HepG2 (cell line): ENCODE measurements at regions of chr7 and their contacts with region 1.

Region 1: GRCh38 chr7:140249036-140249806 is 72.4 kb upstream of the KDM7A start:
- DNase-seq: peak; percentile 95
- ATAC-seq: peak; percentile 59
- H3K4me3 ChIP-seq: peak overlapping the region in 1 of 3 experiments; percentile 9; a peak in 1 of 6 replicates
- H3K27ac ChIP-seq: peak overlapping the region; percentile 68
- H3K4me1 ChIP-seq: peaks cover 95% of the 10 kb centered on the region
- H3K27me3 ChIP-seq: no peaks in the 10 kb centered on the region
- CTCF ChIP-seq: no peak
- EP300 ChIP-seq: peak; percentile 70 to 94; a peak in 3 of 4 replicates
- POLR2A ChIP-seq: no peak
- RAD21 ChIP-seq: no peak

Region 2: DNA sequence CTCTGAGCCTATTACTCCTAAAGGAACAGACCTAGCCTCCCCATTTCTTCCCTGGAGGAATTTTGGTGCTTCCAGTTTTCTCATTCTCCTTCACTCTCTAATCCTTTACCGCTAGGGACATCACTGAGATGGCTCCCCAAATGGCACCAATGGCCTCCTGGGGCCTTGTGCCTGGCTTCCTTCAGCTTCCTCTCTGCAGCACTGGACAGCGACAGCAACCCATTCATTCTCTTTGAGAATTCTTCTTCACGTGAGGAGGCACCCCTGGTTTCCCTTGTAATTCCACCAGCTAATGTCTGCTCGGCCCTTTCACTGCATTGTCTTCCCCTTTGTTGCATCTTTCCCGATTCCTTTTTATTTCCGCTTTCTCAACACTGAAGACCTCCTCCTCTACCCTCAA is 47.8 kb before region 1 on chr7:
- CTCF ChIA-PET with region 1: no interaction called
- POLR2A ChIA-PET with region 1: no interaction called
- in situ Hi-C with region 1: no loop called
- intact Hi-C with region 1: no loop called
- DNase-seq: no peak
- ATAC-seq: peak; percentile 42; the same call in 2 of the 3 replicates
- H3K4me3 ChIP-seq: no peak overlapping the region
- H3K27ac ChIP-seq: no peak overlapping the region
- H3K4me1 ChIP-seq: peaks cover 56% of the 10 kb centered on the region
- H3K27me3 ChIP-seq: peaks cover 0 to 20% of the 10 kb centered on the region in 2 experiments; a peak in 4 of 5 replicates
- CTCF ChIP-seq: no peak
- EP300 ChIP-seq: no peak
- POLR2A ChIP-seq: no peak
- RAD21 ChIP-seq: no peak

Region 3: DNA sequence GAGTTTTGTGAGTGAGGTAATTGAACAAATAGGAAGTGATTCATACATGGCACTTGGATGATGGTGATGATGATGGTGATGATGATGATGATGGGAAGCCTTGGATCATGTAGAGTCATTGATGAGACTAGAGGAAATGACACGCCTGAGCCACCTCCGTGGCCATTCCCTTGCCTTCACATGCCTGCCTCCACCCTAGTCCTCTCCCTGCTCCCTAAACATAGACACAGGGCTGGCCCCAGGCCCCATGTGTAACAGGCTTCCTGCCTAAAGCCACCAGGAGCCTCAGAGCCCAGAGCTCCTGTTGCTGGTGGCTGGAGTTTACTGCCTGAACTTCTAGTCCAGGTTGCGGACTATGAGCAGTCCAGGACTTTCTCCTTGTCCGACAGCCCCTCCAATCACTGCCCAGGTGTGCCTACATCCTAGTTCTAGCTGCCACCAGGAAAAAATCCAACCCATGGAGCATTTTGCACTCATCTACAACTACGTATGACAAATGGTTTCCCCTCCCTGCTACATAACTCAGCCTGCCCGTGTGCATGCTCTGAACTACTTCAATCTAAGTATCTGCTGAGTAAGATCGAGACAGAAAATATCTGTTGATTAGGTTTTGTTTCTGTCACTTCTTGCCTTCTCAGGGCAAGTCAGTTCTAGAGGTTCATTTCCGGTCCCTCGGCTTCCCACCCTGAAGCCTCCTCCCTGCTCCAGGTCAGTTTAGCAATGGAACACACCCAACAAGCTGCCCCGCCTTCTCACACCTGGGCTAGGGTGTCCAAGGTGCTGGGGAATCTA is 36.9 kb before region 1 on chr7:
- CTCF ChIA-PET with region 1: no interaction called
- POLR2A ChIA-PET with region 1: no interaction called
- in situ Hi-C with region 1: no loop called
- intact Hi-C with region 1: no loop called
- DNase-seq: no peak
- ATAC-seq: peak; percentile 37
- H3K4me3 ChIP-seq: no peak overlapping the region
- H3K27ac ChIP-seq: no peak overlapping the region
- H3K4me1 ChIP-seq: peaks cover 72% of the 10 kb centered on the region
- H3K27me3 ChIP-seq: peaks cover 0 to 8% of the 10 kb centered on the region in 2 experiments; a peak in 3 of 5 replicates
- CTCF ChIP-seq: no peak
- EP300 ChIP-seq: no peak
- POLR2A ChIP-seq: no peak
- RAD21 ChIP-seq: no peak

Region 4: DNA sequence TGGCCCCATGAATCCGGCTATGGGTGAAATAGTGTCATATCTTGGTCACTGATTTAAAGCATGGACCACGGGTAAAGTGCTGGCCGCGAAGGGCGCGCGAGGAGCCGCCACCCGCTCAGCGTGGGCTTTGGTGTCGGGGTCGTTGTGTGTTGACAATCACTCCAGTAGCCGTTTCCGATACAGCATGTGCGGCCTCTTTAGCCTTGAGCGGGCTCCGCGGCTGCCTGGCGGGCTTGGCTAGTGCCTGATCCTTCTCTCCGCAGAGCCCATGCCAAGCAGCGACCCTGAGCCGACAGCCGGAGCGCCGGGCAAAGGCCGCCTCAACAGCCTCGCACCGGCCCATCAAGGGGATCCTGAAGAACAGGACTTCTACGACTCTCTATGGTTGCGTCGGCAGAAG is 43.2 kb after region 1 on chr7:
- CTCF ChIA-PET with region 1: no interaction called
- POLR2A ChIA-PET with region 1: no interaction called
- in situ Hi-C with region 1: no loop called
- intact Hi-C with region 1: no loop called
- DNase-seq: no peak
- ATAC-seq: no peak
- H3K4me3 ChIP-seq: no peak overlapping the region
- H3K27ac ChIP-seq: no peak overlapping the region
- H3K4me1 ChIP-seq: peaks cover 22% of the 10 kb centered on the region
- H3K27me3 ChIP-seq: no peaks in the 10 kb centered on the region
- CTCF ChIP-seq: no peak
- EP300 ChIP-seq: no peak
- POLR2A ChIP-seq: no peak
- RAD21 ChIP-seq: no peak

Region 5: DNA sequence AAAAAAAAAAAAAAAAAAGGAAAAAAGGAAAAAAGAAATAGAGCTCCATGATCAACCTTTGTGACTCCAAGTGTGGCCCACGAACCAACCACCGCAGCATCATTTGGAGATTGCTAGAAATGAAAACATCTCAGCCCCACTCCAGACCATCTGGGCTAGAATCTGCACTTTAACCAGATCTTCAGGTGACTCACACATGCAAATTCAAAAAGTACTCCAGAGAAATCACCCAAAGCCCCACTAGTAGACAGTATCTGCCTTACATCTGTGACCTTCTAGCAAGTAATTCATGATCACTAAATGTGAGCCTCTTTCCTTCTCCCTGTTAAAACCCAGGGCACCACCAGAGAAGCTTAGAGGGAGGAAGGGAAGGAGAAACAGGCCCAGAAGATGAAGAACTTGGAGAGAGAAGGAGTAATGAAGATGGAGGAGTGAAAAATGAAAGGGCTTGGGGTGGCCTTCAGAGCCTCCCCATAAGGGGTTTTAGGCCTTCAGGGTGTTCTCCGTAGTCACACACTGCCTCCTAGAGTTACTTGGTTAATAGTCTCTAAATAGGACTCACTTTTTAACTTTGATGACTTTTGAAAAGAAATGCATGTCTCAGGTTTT is 55.1 kb after region 1 on chr7:
- CTCF ChIA-PET with region 1: no interaction called
- POLR2A ChIA-PET with region 1: interaction called, 3 read pairs
- in situ Hi-C with region 1: no loop called
- intact Hi-C with region 1: loop called (anchors 5 kb)
- DNase-seq: peak; percentile 53
- ATAC-seq: peak; percentile 82
- H3K4me3 ChIP-seq: peak overlapping the region in 1 of 3 experiments; percentile 17; a peak in 1 of 6 replicates
- H3K27ac ChIP-seq: no peak overlapping the region
- H3K4me1 ChIP-seq: peaks cover 83% of the 10 kb centered on the region
- H3K27me3 ChIP-seq: no peaks in the 10 kb centered on the region
- CTCF ChIP-seq: peak; percentile 72
- EP300 ChIP-seq: no peak
- POLR2A ChIP-seq: no peak
- RAD21 ChIP-seq: peak; percentile 73

Region 6: GRCh38 chr7:140384894-140385545 is 135.8 kb after region 1 on chr7:
- CTCF ChIA-PET with region 1: no interaction called
- POLR2A ChIA-PET with region 1: no interaction called
- in situ Hi-C with region 1: no loop called
- intact Hi-C with region 1: no loop called
- DNase-seq: no peak
- ATAC-seq: no peak
- H3K4me3 ChIP-seq: no peak overlapping the region
- H3K27ac ChIP-seq: no peak overlapping the region
- H3K4me1 ChIP-seq: no peaks in the 10 kb centered on the region
- H3K27me3 ChIP-seq: no peaks in the 10 kb centered on the region
- CTCF ChIP-seq: no peak
- EP300 ChIP-seq: no peak
- POLR2A ChIP-seq: no peak
- RAD21 ChIP-seq: no peak